Left colon (tissue), 2 donors: ENCODE measurements at regions of chr4 and their contacts with region 1.

Region 1: DNA sequence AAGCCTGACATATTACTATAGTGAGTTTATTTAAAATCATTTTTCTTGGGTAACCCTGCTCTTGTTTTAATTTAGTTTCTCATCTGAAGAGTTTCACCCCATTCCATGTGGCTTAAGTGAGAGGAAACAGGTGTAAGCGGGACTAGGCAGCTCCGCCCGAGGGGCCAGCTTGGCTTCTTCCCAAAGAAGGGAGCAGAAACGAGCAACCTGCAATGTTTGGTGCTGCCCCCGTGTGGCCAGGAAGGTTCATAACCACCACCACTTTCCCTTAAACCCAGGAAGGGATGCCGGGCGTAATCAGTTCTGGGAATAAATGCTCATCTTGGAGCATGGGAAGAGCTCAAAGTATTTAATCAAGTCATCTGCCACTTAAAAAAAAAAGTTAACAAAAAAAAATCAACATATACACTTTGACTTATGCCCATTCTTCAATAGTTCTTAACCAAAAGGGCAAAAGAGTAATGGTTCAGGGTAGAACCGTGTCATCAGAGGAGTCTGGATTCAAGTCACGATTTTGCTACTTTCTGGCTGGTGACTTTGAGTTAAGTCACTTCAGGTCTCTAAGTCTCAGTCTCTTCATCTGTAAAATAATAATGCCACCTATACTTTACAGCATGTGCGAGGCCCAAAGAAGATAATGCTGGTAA is 147.9 kb downstream of the NSUN7 start:
- DNase-seq: peak; percentile 57 to 69
- ATAC-seq: peak; percentile 73

Region 2: GRCh38 chr4:40736910-40737309 is 160.8 kb before region 1 on chr4:
- intact Hi-C with region 1: loop called in 1 of 2 experiments (anchors 10 kb)
- DNase-seq: no peak
- ATAC-seq: peak; percentile 61

Region 3: DNA sequence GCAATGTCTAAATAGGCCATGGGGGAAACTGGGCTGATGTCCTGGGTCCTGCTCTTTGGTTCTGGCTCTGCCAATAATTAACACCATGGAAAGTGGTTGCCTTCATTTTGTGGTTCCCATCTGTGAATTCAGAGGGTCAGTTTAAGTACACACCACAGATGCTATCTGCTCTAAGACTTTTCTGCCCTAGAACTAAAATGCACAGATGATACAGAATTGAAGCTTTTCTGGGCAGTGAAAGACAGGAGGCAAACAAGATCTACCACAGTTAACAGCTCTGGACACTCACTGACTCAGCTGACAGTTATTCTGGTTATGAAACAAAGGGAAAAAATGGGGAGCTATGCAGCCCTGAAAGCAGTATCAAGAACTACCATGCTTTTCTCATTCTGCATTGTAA is 279.3 kb after region 1 on chr4:
- intact Hi-C with region 1: no loop called
- DNase-seq: no peak
- ATAC-seq: peak; percentile 20